Endothelial cell of umbilical vein (primary cell): ENCODE measurements at regions of chr9 and their contacts with region 1.

Region 1: DNA sequence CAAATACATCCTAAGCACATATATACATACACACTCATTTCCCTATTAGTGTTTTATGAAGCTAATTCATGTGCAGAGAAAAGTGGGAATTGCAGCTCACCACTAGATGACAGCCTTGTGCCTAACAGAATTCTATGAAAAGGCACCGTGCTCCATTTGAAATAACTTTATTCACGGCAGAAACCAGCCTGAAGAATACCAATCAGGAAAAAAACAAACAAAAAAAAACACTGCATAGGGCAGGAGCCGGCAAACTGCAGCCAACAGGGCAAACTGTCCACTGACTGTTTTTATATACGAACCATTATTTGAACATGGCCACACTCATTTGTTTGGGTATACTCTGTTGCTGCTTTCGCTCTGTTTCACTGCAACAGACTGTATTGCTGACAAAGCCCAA is 33.6 kb downstream of the ERMP1 start:
- DNase-seq: peak; percentile 82
- H3K4me3 ChIP-seq: no peak overlapping the region
- H3K27ac ChIP-seq: no peak overlapping the region
- H3K4me1 ChIP-seq: peaks cover 2% of the 10 kb centered on the region
- H3K27me3 ChIP-seq: no peaks in the 10 kb centered on the region
- CTCF ChIP-seq: peak; percentile 61 to 71
- POLR2A ChIP-seq: no peak

Region 2: DNA sequence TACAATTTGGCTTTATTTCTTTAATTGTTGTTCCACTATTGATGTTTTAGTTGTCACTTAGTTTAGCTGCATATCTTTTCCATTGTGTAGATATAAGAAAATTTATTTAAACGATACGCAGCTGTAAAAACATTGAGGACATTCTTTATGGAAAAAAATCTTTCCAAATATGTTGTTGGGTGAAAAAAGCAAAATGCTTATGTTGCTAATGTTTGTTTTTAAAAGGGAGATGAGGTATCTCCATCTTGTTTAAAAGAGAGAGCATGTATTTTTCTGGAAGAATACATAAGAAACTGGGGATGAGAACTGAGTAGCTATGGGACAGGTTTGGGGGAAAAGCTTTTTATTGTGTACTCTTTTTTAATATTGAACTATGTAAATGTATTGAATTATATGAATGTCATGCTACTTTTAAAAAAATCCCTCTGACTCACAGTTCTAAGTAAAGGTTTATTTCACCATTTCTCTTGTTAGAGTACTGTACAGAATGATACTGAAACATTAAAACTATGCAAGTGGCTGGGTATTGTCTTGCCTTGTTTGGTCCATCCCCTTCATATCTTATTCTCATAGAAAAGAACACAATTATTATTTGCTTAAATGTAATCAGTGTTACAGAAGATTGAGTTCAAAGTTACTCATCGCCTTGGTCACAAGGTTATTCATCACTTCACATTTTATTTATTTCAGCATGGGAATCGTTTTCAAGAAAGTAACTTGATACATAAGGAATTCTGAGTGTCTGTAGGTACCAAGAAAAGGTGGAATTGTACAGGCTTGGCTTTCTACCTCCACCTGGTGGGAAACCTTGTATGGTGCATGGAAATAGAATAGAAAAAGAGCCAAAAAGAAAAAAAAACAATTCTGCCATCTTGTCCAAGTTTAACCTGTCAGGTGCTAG is 84.6 kb before region 1 on chr9:
- CTCF ChIA-PET with region 1: no interaction called
- POLR2A ChIA-PET with region 1: no interaction called
- dilution Hi-C with region 1: no loop called
- intact Hi-C with region 1: no loop called
- DNase-seq: peak; percentile 36
- H3K4me3 ChIP-seq: no peak overlapping the region
- H3K27ac ChIP-seq: no peak overlapping the region
- H3K4me1 ChIP-seq: peaks cover 19% of the 10 kb centered on the region
- H3K27me3 ChIP-seq: no peaks in the 10 kb centered on the region
- CTCF ChIP-seq: peak in 1 of 2 donors; percentile 12
- POLR2A ChIP-seq: no peak

Region 3: DNA sequence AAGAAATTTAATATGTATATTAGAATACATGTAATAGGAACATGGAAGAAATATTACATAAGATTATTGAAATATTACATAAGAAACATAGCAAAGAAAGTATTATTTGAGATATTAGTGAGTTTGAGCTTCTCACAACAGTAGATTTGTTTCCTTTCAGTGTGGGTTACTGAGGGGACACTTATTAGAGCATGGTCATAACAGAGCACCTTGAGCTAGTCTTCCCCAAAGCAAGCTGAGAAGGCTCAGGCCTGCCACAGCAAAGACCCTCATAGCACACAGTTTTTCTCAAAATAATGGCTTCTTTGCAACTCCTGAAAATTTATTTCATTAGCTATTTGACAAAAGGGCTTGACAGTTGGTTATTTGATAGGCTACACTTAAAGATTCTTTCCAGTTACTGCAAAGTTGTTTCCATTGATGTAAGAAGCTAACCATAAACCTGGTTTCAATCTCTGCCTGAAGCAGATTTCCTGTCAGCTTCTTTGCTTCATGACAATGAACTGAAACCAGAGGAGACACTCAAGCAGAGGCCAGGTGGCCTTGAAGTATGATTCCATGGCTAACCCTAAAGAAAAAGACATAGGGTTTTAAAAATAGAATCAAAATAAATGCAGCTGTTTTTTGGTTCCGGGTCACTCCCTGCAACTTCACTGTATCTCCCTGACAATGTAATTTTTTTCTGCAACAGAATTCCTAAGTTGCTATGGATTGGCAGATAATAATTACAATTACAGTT is 35.0 kb before region 1 on chr9:
- CTCF ChIA-PET with region 1: no interaction called
- POLR2A ChIA-PET with region 1: no interaction called
- dilution Hi-C with region 1: no loop called
- intact Hi-C with region 1: no loop called
- DNase-seq: no peak
- H3K4me3 ChIP-seq: no peak overlapping the region
- H3K27ac ChIP-seq: no peak overlapping the region
- H3K4me1 ChIP-seq: no peaks in the 10 kb centered on the region
- H3K27me3 ChIP-seq: no peaks in the 10 kb centered on the region
- CTCF ChIP-seq: no peak
- POLR2A ChIP-seq: no peak

Region 4: GRCh38 chr9:5832543-5833529 is 33.5 kb after region 1 on chr9 and contains the start of gene ERMP1:
- CTCF ChIA-PET with region 1: interaction called, 23 read pairs
- POLR2A ChIA-PET with region 1: no interaction called
- dilution Hi-C with region 1: no loop called
- intact Hi-C with region 1: loop called (anchors 1 kb)
- DNase-seq: peak; percentile 87
- H3K4me3 ChIP-seq: peak within 1 kb of the TSS; percentile 61 to 95 (median 61)
- H3K27ac ChIP-seq: no peak within 1 kb of the TSS
- H3K4me1 ChIP-seq: peaks cover 5% of the 10 kb centered on the region
- H3K27me3 ChIP-seq: no peaks in the 10 kb centered on the region
- CTCF ChIP-seq: peak; percentile 92 to 93
- POLR2A ChIP-seq: peak; percentile 49
- total RNA-seq, gene ERMP1: 16.6 and 20.1 TPM in 2 replicates

Region 5: DNA sequence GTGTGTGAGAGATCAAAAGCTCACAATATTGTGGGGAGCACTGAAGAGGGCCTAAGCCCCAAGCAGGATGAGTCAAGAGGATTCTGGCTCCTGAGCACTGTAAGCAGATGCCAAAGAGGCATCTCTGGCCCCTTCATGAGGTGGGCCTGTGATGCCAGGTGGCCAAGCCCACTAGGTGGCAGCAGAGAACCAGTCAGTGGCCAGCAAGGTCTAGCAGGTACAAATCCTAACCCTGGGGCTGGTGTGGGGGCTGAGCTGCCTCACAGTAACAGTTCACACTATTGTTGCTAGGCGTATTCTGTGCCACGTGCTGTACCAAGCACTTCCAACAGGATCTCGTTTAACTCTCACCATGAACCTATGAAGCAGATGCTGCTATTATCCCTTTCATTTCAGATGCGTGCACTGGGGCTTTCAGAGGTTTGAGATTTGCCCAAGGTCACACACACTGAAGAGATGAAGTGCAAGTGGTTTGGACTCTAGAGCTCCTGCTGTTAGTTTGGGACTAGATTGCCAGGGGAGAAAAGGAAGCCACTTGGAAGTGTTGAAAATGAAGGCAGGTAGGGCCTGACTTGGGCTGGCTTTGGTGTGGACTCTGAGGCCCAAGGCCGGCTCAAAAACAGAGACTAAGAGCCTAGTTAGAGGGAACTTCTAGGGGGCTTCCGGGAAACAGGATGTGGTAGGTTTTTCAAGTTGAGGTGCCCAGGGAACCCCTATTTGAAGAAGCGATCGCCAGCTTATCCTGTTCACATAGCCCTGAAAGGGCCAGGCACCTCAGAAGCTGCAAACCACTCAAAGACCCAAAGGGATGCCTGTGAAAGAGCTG is 87.0 kb after region 1 on chr9:
- CTCF ChIA-PET with region 1: interaction called, 16 read pairs
- POLR2A ChIA-PET with region 1: no interaction called
- dilution Hi-C with region 1: no loop called
- intact Hi-C with region 1: loop called (anchors 1 kb)
- DNase-seq: peak; percentile 70
- H3K4me3 ChIP-seq: no peak overlapping the region
- H3K27ac ChIP-seq: no peak overlapping the region
- H3K4me1 ChIP-seq: no peaks in the 10 kb centered on the region
- H3K27me3 ChIP-seq: peaks cover 3 to 4% of the 10 kb centered on the region in 2 experiments
- CTCF ChIP-seq: peak; percentile 91 to 97
- POLR2A ChIP-seq: no peak

Region 6: GRCh38 chr9:6049798-6050197 is 250.5 kb after region 1 on chr9:
- CTCF ChIA-PET with region 1: interaction called, 110 read pairs
- POLR2A ChIA-PET with region 1: no interaction called
- dilution Hi-C with region 1: no loop called
- intact Hi-C with region 1: loop called (anchors 1 kb)
- DNase-seq: peak; percentile 21
- H3K4me3 ChIP-seq: no peak overlapping the region
- H3K27ac ChIP-seq: no peak overlapping the region
- H3K4me1 ChIP-seq: no peaks in the 10 kb centered on the region
- H3K27me3 ChIP-seq: peaks cover 2 to 9% of the 10 kb centered on the region in 2 experiments
- CTCF ChIP-seq: peak; percentile 22 to 33
- POLR2A ChIP-seq: no peak